ENCODE measurements at regions of chr2 and their contacts with region 1.

Region 1: DNA sequence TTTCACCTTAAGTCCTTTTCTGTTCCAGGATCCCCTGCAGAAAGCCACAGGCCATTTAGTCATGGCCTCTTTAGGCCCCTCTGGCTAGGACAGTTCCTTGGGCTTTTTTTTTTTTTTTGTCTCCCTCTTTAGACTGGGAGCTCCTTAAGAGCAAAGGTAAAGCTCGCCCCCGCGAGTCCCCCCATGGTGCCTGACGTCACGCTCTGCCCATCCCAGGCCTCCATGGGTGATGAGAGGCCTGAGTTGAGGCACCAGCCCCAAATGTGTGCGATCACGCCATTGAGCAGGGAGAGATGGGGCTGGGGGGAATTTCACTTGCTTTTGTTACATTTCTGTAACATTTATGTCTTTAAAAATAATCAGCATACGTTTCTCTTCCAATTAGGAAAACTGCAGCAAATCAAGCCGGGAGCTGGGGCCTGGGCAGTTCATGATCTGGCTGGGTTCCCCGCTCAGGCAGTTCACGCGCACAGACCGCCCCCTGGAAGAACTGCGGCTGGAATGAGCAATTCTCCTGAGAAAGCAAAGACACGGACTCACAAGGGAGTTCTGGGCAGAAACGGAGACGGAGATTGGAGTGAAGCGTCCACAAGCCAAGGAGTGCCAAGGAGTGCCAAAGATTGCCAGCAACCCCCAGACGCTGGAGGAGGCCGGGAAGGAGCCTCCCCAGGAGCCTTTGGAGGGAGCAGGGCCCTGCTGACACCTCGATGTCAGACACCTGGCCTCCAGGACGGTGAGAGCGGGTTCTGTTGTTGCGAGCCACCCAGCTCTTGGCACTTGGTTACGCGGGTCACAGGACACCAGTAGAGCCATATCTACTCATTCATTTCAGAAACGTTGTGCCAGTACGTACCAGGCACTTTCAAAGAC is 108.4 kb upstream of the ODC1 start:
- DNase-seq: no peak
- ATAC-seq: no peak
- H3K4me3 ChIP-seq: no peak overlapping the region
- H3K27ac ChIP-seq: no peak overlapping the region
- H3K4me1 ChIP-seq: no peaks in the 10 kb centered on the region
- H3K27me3 ChIP-seq: no peaks in the 10 kb centered on the region
- CTCF ChIP-seq: no peak

Region 2: GRCh38 chr2:10331027-10331701 is 225.3 kb before region 1 on chr2:
- intact Hi-C with region 1: no loop called
- DNase-seq: peak; percentile 66 to 80
- ATAC-seq: peak; percentile 30 to 71 (median 44)
- H3K4me3 ChIP-seq: peak overlapping the region; percentile 5
- H3K27ac ChIP-seq: no peak overlapping the region
- H3K4me1 ChIP-seq: peaks cover 18% of the 10 kb centered on the region
- H3K27me3 ChIP-seq: no peaks in the 10 kb centered on the region
- CTCF ChIP-seq: no peak

Region 3: DNA sequence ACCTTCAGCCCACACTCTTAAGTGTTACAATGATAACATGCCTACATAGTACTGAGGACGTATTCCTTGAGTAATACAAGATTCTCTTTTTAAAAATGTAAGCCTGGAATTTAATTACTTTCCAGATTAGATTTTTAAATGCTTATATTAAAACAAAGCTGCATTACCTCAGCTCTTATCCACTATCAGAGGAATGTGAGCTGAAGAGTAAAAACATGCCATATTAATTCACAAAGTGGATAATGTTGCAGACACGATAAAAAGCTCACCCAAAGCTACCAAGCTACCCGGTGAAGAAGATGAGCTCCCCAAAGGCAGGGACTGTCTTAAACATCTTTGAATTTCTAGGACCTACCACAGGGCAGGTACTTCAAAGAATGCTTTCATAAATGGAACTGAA is 25.5 kb after region 1 on chr2:
- intact Hi-C with region 1: loop called in 1 of 2 experiments (anchors 1 kb)
- DNase-seq: no peak
- ATAC-seq: no peak
- H3K4me3 ChIP-seq: no peak overlapping the region
- H3K27ac ChIP-seq: no peak overlapping the region
- H3K4me1 ChIP-seq: peaks cover 2% of the 10 kb centered on the region
- H3K27me3 ChIP-seq: no peaks in the 10 kb centered on the region
- CTCF ChIP-seq: no peak

Region 4: DNA sequence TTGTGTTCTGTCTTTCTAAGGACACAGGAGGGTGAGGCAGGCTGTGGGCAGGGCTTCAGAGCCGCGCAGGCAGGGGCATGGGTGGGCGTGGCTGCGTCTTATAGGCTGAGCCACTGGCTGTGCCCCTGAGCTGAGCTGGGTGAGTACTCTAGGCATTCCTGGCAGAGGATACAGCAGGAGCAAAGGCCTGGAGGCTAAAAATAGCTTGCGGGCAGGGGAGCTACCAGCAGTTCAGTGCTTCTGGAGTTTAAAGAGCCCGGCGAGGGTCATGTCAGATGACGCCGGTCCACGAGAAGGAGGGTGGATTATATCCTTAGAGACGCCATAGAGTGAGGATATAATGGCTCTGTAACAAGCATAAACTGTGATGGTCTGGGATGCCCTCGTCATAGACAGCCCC is 287.6 kb after region 1 on chr2:
- intact Hi-C with region 1: no loop called
- DNase-seq: peak; percentile 81 to 93
- ATAC-seq: peak; percentile 84 to 93 (median 88)
- H3K4me3 ChIP-seq: peak overlapping the region; percentile 42
- H3K27ac ChIP-seq: peak overlapping the region; percentile 58
- H3K4me1 ChIP-seq: peaks cover 30% of the 10 kb centered on the region
- H3K27me3 ChIP-seq: no peaks in the 10 kb centered on the region
- CTCF ChIP-seq: no peak